ENCODE measurements at regions of chr22 and their contacts with region 1.

Region 1: DNA sequence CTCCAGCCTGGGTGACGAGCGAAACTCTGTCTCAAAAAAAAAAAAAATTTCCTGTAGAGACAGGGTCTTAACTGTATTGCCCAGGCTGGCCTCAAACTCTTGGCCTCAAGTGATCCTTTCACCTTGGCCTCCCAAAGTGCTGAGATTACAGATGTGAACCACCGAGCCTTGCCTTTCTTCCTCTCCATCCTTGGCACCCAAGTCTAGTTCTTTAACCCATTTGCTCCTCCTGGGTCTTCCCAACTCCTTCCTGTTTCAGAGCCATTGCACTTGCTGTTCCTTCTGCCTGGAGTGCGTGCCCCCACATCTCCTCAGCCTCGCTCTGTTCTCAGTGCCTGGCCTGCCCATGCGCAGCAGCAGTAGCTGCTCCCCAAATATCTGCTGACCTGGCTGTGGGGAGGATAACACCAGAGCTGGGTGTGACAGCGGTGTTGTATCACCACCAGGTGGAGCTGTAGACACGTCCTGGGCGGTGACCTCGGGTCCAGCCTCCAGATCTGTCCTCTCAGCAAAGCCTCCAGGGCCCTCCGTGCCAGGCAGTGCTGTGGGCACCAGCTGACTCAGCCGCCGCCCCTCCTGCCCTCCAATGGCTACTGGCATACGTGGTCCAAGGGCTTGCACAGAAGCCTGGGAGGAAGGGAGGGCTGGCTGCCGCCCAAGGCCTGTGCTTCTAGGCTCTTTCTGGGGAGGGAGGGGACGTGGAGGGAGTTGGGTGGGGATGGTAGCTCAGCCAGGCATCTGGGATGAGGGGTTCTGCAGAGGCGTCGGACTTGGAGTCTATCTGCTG is 22.0 kb downstream of the TEF start:
- DNase-seq: peak; percentile 85 to 98 (median 90)
- ATAC-seq: peak; percentile 82 to 94 (median 92)
- H3K4me3 ChIP-seq: no peak overlapping the region
- H3K27ac ChIP-seq: no peak overlapping the region
- H3K4me1 ChIP-seq: peaks cover 0 to 13% (median 5%) of the 10 kb centered on the region in 3 donors
- H3K27me3 ChIP-seq: no peaks in the 10 kb centered on the region
- CTCF ChIP-seq: peak; percentile 88 to 96 (median 90)

Region 2: GRCh38 chr22:41352051-41352450 is 51.7 kb before region 1 on chr22:
- intact Hi-C with region 1: no loop called
- DNase-seq: no peak
- ATAC-seq: peak in 1 of 4 donors; percentile 63
- H3K4me3 ChIP-seq: no peak overlapping the region
- H3K27ac ChIP-seq: no peak overlapping the region
- H3K4me1 ChIP-seq: no peaks in the 10 kb centered on the region
- H3K27me3 ChIP-seq: no peaks in the 10 kb centered on the region
- CTCF ChIP-seq: no peak

Region 3: DNA sequence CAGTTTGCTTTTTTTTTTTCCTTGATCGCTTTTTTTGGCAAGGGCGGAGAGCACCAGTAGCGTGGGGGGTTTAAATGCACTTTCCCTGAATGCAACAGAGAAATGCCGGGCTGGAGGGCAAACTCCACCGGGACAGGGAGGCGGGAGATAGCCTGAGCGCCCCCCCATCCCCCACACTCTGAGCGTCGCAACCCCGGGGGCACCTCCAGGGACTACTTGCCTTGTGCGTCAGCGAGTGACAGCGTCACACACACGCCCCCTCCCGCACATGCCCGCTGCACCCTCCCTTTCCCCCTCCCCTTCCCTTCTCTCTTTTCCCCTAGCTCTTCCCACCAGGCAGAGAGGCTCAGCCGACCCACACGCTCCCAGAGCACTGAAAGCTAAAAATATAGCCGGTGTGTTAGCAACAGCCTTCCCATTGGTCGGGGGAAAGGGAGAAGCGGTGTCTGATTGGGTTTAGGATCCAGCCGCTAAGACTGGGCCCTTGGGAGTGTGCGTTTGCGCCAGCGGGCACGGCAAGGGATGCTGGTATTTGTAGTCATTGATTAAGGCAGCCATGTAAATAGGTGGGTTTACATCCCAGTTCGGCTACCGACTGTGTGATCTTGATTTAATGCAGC is 44.6 kb after region 1 on chr22:
- intact Hi-C with region 1: loop called in 1 of 3 experiments (anchors 5 kb)
- DNase-seq: peak; percentile 89 to 97 (median 96)
- ATAC-seq: peak; percentile 63 to 76 (median 70)
- H3K4me3 ChIP-seq: peak overlapping the region; percentile 65 to 98 (median 91)
- H3K27ac ChIP-seq: peak overlapping the region; percentile 96 to 100 (median 99)
- H3K4me1 ChIP-seq: peaks cover under 1 to 5% (median 5%) of the 10 kb centered on the region in 3 donors
- H3K27me3 ChIP-seq: no peaks in the 10 kb centered on the region
- CTCF ChIP-seq: no peak

Region 4: GRCh38 chr22:41517172-41518047 is 113.7 kb after region 1 on chr22:
- intact Hi-C with region 1: loop called (anchors 2 to 10 kb)
- DNase-seq: peak in 5 of 6 donors; percentile 49 to 88 (median 76)
- ATAC-seq: peak; percentile 54 to 89 (median 83)
- H3K4me3 ChIP-seq: no peak overlapping the region
- H3K27ac ChIP-seq: no peak overlapping the region
- H3K4me1 ChIP-seq: no peaks in the 10 kb centered on the region
- H3K27me3 ChIP-seq: no peaks in the 10 kb centered on the region
- CTCF ChIP-seq: peak; percentile 64 to 77 (median 74)

Region 5: DNA sequence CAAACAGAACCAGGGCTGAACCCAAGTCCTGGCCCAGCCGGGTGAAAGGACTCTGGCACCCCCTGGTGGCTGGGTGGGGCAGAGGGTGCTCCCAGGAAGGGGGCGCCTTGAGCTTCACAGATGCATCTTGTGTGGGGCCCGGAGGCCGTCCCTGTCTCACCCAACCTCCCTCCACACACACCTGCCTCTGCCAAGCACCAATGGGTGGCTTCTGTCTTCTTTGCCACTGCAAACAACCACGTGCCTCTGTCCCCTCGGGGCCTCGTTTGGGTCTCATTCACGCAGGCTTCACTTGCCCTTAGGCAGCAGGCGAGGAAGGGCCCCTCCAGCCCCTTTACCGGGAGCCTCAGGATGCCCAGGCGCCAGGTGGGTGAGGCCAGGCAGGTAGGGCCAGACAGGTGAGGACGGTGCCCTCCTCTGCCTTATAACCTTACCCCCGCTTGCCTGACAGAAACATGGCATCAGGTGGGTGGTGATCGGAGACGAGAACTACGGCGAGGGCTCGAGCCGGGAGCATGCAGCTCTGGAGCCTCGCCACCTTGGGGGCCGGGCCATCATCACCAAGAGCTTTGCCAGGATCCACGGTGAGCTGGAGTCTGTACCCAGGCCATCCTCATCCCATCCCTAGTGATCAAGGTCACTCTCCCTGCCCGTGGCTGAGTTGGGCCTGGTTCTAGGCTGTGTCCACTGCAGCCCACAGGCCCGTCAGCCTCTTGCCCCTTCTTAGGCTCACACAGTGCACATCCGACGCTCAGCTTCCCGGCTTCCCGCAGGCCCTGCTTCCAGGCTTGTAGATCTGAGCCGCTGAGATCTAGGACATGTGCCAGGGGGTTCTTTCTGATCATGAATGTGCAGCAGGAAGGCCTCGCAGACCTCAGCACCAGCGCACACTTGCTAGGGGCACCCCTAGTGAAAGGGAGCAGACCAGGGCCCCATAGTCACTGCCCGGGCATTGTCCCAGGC is 123.4 kb after region 1 on chr22:
- intact Hi-C with region 1: loop called in 2 of 3 experiments (anchors 5 to 10 kb)
- DNase-seq: peak in 4 of 6 donors; percentile 48 to 79 (median 72)
- ATAC-seq: peak; percentile 36 to 55 (median 52)
- H3K4me3 ChIP-seq: no peak overlapping the region
- H3K27ac ChIP-seq: peak overlapping the region in 1 of 4 donors; percentile 8
- H3K4me1 ChIP-seq: peaks cover 10 to 13% (median 11%) of the 10 kb centered on the region in 3 donors
- H3K27me3 ChIP-seq: no peaks in the 10 kb centered on the region
- CTCF ChIP-seq: peak; percentile 62 to 77 (median 68)

Region 6: DNA sequence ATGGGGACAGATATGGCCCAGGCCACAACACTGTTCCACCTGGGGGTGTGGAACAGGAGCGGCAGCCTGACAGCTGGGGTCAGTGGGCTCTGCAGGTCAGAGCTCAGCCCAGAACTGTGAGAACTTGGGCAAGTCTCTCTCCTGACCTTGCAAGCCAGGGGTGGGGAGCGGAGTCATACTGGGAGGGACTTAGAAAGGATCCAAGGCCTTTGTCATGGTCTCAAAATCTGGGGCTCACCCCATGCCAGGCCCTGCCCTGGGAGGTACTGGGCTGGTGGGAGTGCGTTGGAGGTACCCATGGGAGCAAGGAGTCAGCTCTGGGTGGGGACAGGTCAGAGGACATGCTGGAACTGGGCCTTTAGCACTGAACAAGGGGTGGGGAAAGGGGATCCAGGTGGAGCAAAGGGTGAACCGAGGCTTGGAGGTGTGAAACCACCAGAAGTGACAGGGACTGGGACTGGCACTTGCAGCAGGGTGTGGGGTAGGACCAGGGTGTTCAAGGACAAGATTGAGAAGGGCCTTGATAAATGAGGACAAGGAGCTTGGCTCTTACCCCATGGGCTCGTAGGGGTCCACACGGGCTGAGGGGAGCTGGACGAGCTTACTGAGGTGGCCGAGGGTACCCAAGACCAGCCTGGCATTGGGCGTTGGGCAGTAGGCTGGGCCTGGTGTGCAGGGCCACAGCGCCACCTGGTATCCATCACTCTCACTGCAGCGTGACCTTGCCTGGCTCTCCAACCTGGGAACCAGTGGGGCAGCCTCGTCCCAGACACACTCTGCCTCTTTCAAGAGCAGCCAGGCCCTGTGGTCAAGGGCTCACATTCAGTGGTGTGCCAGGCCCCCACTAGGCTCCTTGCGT is 193.3 kb after region 1 on chr22:
- intact Hi-C with region 1: loop called in 2 of 3 experiments (anchors 5 to 10 kb)
- DNase-seq: peak; percentile 47 to 89 (median 80)
- ATAC-seq: peak; percentile 94 to 100 (median 96)
- H3K4me3 ChIP-seq: no peak overlapping the region
- H3K27ac ChIP-seq: no peak overlapping the region
- H3K4me1 ChIP-seq: no peaks in the 10 kb centered on the region
- H3K27me3 ChIP-seq: no peaks in the 10 kb centered on the region
- CTCF ChIP-seq: peak; percentile 47 to 71 (median 65)